Mammary epithelial cell (primary cell): ENCODE measurements at regions of chr1 and their contacts with region 1.

Region 1: DNA sequence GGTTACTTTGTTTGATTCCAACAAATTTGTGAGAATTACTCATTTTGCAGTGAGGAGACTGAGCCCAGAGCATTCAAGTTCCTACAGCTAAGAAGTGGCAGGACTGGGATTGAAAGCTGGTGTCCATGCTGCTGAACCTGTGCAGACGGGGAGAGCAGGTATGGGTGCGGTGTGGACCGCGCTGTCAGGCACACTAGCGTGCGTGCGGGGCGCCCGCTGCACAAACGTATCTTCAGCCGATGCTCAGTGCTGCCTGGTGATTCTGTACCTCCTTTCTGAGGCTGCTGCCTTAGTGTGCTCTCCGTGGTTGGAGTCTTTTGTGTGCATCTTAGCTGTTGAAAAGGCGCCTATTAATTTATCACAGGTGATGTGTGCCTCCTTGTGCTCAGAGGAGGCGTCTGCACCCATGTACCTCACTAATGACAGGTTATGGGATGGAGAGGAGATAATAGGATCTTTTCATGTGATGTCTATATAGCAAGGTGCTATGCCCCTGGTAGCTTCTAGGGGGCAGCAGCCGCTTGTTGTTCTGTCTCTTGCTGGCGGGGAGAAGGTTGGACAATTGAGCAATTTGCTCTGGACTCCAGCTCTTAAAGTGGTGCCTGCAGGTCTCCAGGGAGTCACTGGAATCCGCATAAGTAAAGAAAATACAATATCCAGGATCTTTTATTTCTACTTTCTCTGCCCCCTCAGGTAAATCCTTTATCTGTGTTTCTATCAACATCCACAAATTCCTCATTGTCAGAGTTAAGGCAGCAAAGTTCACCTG is 32.5 kb downstream of the PEX14 start:
- DNase-seq: peak; percentile 72
- H3K4me3 ChIP-seq: no peak overlapping the region
- H3K27ac ChIP-seq: no peak overlapping the region
- H3K4me1 ChIP-seq: peaks cover 25% of the 10 kb centered on the region
- H3K27me3 ChIP-seq: no peaks in the 10 kb centered on the region
- CTCF ChIP-seq: peak; percentile 92 to 97

Region 2: DNA sequence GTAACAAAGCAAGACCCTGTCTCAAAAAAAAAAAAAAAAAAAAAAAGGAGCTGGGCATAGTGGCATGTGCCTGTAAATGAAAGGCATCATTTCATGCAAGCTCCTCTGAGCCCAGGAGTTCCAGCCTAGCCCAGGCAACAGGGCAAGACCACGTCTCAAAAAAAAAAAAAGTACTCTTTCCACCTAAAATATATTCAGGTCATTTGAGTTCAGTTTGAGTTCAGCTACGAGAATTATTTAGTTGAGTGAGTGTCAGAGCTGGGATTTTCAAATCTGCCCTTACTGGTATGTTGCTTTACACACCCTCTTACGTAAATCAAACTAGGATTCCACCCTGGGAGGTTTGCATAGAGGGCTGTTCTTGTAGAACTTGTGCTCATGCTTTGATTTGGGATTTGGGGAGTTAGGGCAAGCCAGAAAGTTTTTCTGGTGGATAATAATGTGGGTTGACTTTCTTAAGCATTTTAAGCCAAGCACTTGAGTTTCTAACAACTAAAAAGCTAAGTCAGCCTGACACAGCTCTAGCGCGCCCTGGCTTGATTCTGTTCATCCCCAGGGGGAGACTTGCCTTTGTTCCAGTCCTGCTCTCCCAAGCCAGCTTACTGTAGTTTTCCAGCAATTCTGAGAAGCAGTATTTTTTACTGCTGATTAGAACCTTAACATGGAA is 119.7 kb before region 1 on chr1:
- CTCF ChIA-PET with region 1: no interaction called
- dilution Hi-C with region 1: no loop called
- in situ Hi-C with region 1: no loop called
- intact Hi-C with region 1: no loop called
- DNase-seq: peak; percentile 41
- H3K4me3 ChIP-seq: no peak overlapping the region
- H3K27ac ChIP-seq: peak overlapping the region; percentile 17
- H3K4me1 ChIP-seq: peaks cover 11% of the 10 kb centered on the region
- H3K27me3 ChIP-seq: no peaks in the 10 kb centered on the region
- CTCF ChIP-seq: peak in 1 of 2 donors; percentile 5

Region 3: GRCh38 chr1:10635085-10635896 is 128.0 kb after region 1 on chr1:
- CTCF ChIA-PET with region 1: no interaction called
- dilution Hi-C with region 1: no loop called
- in situ Hi-C with region 1: no loop called
- intact Hi-C with region 1: loop called (anchors 2 kb)
- DNase-seq: peak; percentile 94
- H3K4me3 ChIP-seq: peak overlapping the region; percentile 4 to 39 (median 22)
- H3K27ac ChIP-seq: peak overlapping the region; percentile 94
- H3K4me1 ChIP-seq: peaks cover 43% of the 10 kb centered on the region
- H3K27me3 ChIP-seq: no peaks in the 10 kb centered on the region
- CTCF ChIP-seq: no peak

Region 4: DNA sequence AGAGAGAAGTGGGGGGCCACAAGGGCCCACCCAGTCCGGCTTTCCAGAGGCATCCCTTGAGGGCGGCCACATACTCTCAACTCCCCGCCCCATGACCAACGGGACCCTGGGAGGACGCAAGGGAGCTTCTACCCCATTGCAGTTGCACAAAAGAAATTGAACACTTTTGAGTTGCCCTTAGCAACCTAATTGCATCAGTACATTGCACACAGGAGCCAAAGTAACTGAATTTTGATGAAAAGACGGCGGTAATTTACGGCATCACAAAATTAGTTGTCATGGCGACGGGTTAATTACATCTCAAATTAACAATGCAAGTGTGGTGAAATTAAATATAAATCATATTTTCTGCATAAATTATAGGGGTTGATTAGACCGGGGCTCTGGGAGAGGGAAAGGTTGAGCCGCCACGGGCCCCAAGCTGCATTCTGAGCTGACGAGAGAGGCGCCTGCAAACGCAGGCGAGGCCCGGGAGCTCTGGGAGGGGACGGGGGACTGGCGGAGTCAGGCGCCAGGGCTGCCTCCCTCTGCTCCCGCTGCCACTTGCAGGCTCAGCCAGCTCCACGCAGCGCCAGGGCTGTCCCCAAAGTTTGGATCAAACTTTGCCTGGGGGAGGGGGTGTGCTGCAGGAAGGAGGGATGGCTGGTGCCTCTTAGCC is 227.8 kb after region 1 on chr1:
- CTCF ChIA-PET with region 1: no interaction called
- dilution Hi-C with region 1: no loop called
- in situ Hi-C with region 1: no loop called
- intact Hi-C with region 1: no loop called
- DNase-seq: no peak
- H3K4me3 ChIP-seq: no peak overlapping the region
- H3K27ac ChIP-seq: no peak overlapping the region
- H3K4me1 ChIP-seq: peaks cover 30% of the 10 kb centered on the region
- H3K27me3 ChIP-seq: no peaks in the 10 kb centered on the region
- CTCF ChIP-seq: no peak

Region 5: GRCh38 chr1:10796019-10796944 is 289.0 kb after region 1 on chr1 and contains the start of gene CASZ1:
- CTCF ChIA-PET with region 1: no interaction called
- dilution Hi-C with region 1: no loop called
- in situ Hi-C with region 1: no loop called
- intact Hi-C with region 1: loop called (anchors 5 kb)
- DNase-seq: peak; percentile 92
- H3K4me3 ChIP-seq: peak within 1 kb of the TSS; percentile 64 to 87 (median 80)
- H3K27ac ChIP-seq: no peak within 1 kb of the TSS
- H3K4me1 ChIP-seq: peaks cover 10% of the 10 kb centered on the region
- H3K27me3 ChIP-seq: no peaks in the 10 kb centered on the region
- CTCF ChIP-seq: no peak
- total RNA-seq, gene CASZ1: 13.0 to 14.1 TPM

Region 6: DNA sequence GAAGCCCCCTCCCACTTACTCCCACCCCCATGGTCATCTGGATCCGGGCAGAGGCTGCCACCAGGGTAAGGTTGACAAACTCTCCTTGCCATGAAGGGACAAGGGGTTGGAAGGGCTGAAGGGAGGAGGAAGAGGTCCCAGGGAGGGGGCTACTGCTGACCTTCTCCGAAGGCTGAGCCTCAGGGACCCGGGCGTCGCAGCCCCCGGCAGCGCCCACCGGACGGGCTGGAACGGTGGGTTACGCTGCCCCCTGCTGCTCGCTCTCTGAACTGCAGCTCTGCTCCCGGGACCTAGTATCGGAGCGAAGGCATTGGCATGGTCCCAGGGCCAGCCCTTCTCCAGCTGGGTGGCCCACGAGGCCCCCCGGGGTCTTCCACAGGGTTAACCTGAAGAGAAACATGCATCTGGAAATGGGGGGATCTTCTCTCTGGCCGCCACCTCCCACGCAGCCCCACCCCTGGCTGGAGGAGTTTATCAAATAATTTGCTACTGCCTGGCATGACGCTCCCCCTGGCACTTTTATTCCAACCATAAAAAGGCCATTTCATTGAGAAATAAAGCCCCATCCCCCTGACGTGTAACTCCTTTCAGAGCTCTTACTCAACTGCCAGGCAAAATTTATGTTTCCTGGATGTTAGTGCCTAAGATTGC is 434.7 kb after region 1 on chr1:
- CTCF ChIA-PET with region 1: interaction called, 4 read pairs
- dilution Hi-C with region 1: no loop called
- in situ Hi-C with region 1: no loop called
- intact Hi-C with region 1: loop called (anchors 2 kb)
- DNase-seq: no peak
- H3K4me3 ChIP-seq: no peak overlapping the region
- H3K27ac ChIP-seq: no peak overlapping the region
- H3K4me1 ChIP-seq: peaks cover 4% of the 10 kb centered on the region
- H3K27me3 ChIP-seq: no peaks in the 10 kb centered on the region
- CTCF ChIP-seq: peak; percentile 84 to 96

Region 7: GRCh38 chr1:11645670-11646265 is 1138.5 kb after region 1 on chr1:
- CTCF ChIA-PET with region 1: no interaction called
- dilution Hi-C with region 1: no loop called
- in situ Hi-C with region 1: no loop called
- intact Hi-C with region 1: loop called (anchors 10 kb)
- DNase-seq: peak; percentile 49
- H3K4me3 ChIP-seq: no peak overlapping the region
- H3K27ac ChIP-seq: no peak overlapping the region
- H3K4me1 ChIP-seq: no peaks in the 10 kb centered on the region
- H3K27me3 ChIP-seq: no peaks in the 10 kb centered on the region
- CTCF ChIP-seq: peak; percentile 71 to 78